ENCODE measurements at regions of chr2 and their contacts with region 1.

Region 1: DNA sequence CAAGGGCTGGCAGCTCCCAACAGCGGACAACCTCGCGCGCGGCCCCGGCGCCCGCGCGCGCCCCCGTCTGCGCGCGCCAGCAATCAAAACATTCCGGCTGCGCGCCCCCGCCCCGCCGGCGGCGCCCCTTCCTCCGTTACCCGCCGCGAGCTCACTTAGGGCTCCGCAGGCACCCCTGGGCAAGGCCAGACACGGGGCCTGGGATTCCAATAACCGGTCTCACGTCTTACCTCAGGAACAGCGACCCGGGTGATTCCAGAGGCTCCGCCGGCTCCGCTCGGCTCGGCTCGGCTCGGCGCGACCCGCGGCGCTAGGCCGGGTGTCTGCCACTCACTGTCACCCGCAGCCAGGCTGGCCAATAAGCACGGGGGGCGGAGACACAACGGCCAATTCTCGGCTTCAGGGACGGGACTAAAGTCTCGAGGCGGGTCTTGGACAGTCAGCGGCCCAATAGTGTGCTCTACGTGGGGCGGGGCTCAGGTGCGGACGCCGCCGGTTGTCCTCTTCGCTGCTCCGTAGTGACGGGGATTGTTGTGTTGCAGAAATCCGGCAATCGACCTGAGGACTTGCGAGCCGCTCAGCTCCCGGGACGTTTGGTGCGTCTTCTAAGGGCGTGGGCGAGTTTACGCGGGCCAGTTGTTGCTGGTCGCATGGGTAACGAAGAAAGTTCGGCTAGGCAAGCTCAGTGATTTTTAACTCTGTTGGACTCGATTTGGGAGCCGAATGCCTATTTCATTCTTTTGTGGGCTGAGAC is at the starts of genes ANKZF1 and ATG9A:
- DNase-seq: peak; percentile 99
- H3K4me3 Mint-ChIP-seq: peak within 1 kb of the TSS; percentile 95
- H3K27ac Mint-ChIP-seq: peak within 1 kb of the TSS; percentile 99
- H3K4me1 Mint-ChIP-seq: peaks cover 50% of the 10 kb centered on the region
- H3K27me3 Mint-ChIP-seq: no peaks in the 10 kb centered on the region
- total RNA-seq, gene ANKZF1: 97.0 to 97.5 TPM
- total RNA-seq, gene ATG9A: 34.7 to 39.5 TPM

Region 2: DNA sequence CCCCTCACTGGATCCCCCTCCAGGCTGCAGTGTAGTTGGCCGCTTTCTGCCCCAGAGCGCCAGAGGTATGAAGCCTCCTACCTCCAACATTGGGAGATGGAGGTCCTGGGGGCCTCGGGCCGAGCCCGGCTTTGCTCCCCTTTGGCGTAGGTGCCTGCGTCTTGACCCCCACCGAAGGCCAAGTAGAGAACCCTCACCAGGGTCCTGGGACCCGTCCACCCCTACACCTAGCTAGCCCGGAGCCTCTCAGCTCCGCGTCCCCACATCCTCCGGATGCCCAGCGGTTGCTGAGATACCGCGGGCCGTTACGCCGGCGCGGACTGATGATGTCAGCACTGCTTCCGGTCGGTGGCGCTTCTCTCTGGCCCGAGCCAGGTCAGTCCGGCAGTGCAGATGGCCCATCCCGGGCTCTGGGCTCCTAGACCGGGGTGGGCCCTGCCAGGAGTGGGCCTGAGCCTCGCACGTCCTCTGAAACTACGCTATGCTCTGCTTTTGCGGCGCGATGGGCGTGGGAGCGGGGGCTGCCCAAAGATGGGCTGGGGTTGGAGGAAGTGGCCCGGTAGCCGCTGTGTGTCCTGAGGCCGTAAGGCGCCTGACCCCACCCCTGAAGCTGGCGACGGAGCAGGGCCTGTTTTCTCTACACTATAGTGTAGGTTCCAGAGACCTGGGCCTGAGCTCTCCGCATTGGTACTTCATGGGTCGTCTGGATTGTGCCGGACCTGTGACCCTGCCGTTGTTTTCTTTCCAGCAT is 15.8 kb after region 1 on chr2 and contains the starts of genes GLB1L and STK16:
- CTCF ChIA-PET with region 1: interaction called, 8 read pairs
- POLR2A ChIA-PET with region 1: interaction called, 32 read pairs
- intact Hi-C with region 1: loop called (anchors 1 kb)
- DNase-seq: peak; percentile 95
- H3K4me3 Mint-ChIP-seq: peak within 1 kb of the TSS; percentile 98
- H3K27ac Mint-ChIP-seq: peak within 1 kb of the TSS; percentile 98
- H3K4me1 Mint-ChIP-seq: peaks cover 61% of the 10 kb centered on the region
- H3K27me3 Mint-ChIP-seq: no peaks in the 10 kb centered on the region
- total RNA-seq, gene GLB1L: 4.8 to 4.9 TPM
- total RNA-seq, gene STK16: 37.1 to 37.8 TPM

Region 3: DNA sequence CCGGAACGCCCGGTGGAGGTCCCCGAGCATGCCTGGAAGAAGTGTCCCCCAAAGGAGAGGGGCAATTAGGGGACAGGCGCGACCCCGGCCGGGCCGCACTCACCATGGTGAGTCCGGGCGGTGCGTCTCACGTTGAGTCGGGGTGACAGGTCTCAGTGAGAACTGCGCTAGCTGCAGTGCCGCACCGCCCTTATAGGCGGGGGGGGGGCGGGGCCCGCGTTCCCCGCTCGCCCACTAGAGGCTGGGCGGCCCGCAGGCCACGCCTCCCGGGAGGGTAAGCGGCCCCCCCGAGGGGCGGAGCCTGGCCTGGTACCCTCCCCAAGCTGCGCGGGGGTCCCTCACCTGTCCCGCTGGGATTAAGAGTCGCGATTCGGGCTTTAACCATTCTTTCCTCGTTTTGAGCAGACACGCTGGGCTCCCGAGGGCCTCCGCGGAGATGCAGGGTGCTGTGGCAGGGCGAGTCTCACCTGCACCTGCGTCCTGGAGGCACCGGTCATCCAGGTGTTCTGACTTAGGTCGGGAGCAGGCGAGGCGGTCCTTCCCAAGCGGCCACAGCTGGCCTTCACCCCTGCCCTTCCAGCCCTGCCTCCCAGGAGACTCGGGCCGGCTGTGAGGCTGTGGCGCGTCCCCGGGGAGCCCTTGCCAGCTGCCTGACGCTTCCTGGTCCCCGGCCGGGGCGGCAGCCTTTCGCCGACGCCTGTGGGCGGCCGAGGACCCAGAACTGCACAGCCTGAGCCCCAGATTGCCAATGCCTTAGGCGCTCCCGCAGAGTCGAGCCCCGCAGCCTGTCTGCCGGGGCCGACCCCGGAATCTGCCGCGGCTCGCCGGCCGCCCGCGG is 24.5 kb after region 1 on chr2 and contains the start of gene TUBA4A:
- CTCF ChIA-PET with region 1: interaction called, 9 read pairs
- POLR2A ChIA-PET with region 1: interaction called, 75 read pairs
- intact Hi-C with region 1: loop called (anchors 1 kb)
- DNase-seq: peak; percentile 92
- H3K4me3 Mint-ChIP-seq: peak within 1 kb of the TSS; percentile 86
- H3K27ac Mint-ChIP-seq: peak within 1 kb of the TSS; percentile 97
- H3K4me1 Mint-ChIP-seq: peaks cover 49% of the 10 kb centered on the region
- H3K27me3 Mint-ChIP-seq: no peaks in the 10 kb centered on the region
- total RNA-seq, gene TUBA4A: 219 to 229 TPM

Region 4: GRCh38 chr2:219398721-219399333 is 169.3 kb after region 1 on chr2:
- CTCF ChIA-PET with region 1: no interaction called
- POLR2A ChIA-PET with region 1: no interaction called
- intact Hi-C with region 1: no loop called
- DNase-seq: no peak
- H3K4me3 Mint-ChIP-seq: no peak overlapping the region
- H3K27ac Mint-ChIP-seq: no peak overlapping the region
- H3K4me1 Mint-ChIP-seq: peaks cover 10% of the 10 kb centered on the region
- H3K27me3 Mint-ChIP-seq: peaks cover 4% of the 10 kb centered on the region

Region 5: DNA sequence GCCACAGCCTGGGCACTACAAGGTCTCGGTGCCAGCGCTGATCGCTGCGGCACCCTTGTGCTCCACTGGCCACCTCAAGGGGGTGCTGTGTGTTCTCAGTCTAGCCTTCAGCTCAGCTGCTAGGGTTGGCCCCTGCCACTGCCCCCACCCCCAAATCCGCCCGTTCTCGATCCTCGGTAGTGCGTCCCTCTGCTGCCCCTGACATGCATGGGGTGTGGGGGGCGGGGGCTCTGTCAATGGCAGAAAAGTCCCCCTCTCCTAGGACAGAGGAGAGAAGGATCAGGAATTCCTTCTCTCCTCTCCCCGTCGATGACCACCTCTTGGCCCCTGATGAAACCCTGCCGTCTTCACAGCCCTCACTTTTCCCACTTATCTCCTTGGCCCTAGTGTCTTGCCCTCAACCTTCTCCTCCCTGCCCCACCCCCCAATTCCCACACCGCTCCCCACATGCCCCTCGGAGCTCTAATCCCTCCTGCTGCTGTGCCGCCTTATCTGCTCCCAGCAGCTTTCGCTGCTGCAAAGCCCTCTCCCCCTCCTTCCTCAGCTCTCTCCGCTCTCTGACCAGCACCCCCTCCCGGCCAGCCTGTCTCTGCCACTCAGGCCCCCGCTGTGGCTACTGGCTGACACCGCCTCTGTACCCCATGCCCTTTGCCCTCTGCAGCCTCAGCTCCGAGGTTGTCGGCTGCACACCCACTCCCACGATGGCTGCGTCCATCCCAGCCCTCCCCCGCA is 280.5 kb after region 1 on chr2:
- CTCF ChIA-PET with region 1: no interaction called
- POLR2A ChIA-PET with region 1: no interaction called
- intact Hi-C with region 1: no loop called
- DNase-seq: peak; percentile 65
- H3K4me3 Mint-ChIP-seq: no peak overlapping the region
- H3K27ac Mint-ChIP-seq: no peak overlapping the region
- H3K4me1 Mint-ChIP-seq: peaks cover 25% of the 10 kb centered on the region
- H3K27me3 Mint-ChIP-seq: peaks cover 46% of the 10 kb centered on the region

Region 6: GRCh38 chr2:219851801-219852481 is 622.5 kb after region 1 on chr2:
- CTCF ChIA-PET with region 1: no interaction called
- POLR2A ChIA-PET with region 1: no interaction called
- intact Hi-C with region 1: no loop called
- DNase-seq: no peak
- H3K4me3 Mint-ChIP-seq: no peak overlapping the region
- H3K27ac Mint-ChIP-seq: no peak overlapping the region
- H3K4me1 Mint-ChIP-seq: no peaks in the 10 kb centered on the region
- H3K27me3 Mint-ChIP-seq: peaks cover 14% of the 10 kb centered on the region